Common myeloid progenitor, CD34-positive (primary cell): ENCODE measurements at regions of chr6 and their contacts with region 1.

Region 1: DNA sequence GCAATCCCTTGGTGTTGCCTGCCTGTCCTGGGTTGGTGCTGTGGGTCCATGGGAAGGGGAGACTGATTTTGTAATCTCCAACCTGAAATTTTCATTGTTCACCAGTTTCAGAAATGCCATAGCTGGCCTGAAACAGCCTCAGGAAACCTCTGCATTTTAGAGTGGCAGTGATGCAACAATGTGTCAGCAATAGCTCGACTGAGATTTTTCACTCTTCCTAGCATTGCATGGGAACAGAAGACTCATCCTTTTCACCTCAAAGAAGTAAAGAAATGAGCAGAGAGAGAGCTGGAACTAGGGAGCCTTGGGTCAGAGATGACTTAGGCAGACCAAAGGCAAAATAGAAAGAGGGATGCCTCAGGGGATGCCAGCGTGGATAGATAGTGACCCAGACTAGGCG is 23.7 kb upstream of the TMEM14A start:
- DNase-seq: no peak
- H3K4me3 ChIP-seq: no peak overlapping the region
- H3K27ac ChIP-seq: no peak overlapping the region
- H3K4me1 ChIP-seq: peaks cover 2 to 61% (median 6%) of the 10 kb centered on the region in 4 experiments
- H3K27me3 ChIP-seq: no peaks in the 10 kb centered on the region

Region 2: GRCh38 chr6:52407467-52407866 is 239.7 kb before region 1 on chr6:
- CTCF ChIA-PET with region 1: interaction called, 10 read pairs
- POLR2A ChIA-PET with region 1: no interaction called
- DNase-seq: peak; percentile 72 to 89 (median 84)
- H3K4me3 ChIP-seq: no peak overlapping the region
- H3K27ac ChIP-seq: no peak overlapping the region
- H3K4me1 ChIP-seq: no peaks in the 10 kb centered on the region
- H3K27me3 ChIP-seq: no peaks in the 10 kb centered on the region

Region 3: DNA sequence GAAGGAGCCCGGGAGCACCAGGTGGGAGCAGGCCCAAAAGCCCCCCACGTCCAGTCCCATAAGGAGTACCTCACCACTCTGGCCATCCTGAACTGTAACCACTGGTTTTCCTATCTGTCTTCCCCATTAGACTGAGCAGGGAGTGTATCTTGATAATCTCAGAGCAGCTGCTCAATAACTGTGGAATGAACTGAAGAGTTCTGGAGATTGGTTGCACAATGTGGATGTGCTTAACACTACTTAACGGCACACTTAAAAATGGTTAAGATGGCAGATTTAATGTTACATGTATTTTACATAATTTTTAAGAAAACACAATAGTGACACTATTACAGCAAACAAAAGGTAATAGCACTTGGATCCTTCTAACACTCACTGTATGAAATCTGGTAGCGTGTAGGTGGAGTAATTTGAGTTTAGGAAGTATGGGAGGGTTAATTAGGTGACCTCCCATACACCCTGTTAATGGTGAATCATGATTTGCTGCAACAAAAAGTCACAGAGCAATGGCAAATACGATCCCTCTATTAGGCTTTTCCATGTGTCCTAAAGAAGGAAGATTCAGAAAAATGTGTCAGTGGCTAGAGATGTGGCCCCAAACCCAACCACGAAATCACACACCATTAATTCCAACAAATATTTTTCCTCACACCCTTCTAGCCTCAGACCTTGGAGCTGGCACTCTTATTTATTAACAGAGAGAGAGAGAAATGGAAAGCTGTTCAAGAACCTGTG is 88.8 kb before region 1 on chr6:
- CTCF ChIA-PET with region 1: no interaction called
- POLR2A ChIA-PET with region 1: no interaction called
- DNase-seq: no peak
- H3K4me3 ChIP-seq: no peak overlapping the region
- H3K27ac ChIP-seq: no peak overlapping the region
- H3K4me1 ChIP-seq: peaks cover 0 to 5% (median 2%) of the 10 kb centered on the region in 4 experiments
- H3K27me3 ChIP-seq: no peaks in the 10 kb centered on the region

Region 4: DNA sequence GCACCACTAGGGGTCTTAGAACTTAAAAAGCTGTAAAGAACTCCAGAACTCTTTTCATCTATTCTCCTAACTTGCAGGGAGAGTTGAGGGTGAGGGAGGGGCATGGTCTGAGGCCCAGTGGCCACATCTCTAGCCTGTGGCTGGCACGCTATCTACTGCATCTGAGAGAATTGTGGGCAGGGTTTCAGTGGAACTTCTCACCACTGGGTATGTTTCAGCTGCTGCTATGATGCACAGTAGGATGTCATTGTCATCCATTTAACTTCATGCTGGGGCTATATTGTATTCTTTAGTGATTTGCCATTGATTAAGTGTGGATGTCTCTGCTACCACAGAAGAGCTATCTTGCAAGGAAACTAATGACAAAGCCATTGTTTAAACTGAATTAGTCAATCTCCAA is 28.2 kb after region 1 on chr6:
- CTCF ChIA-PET with region 1: interaction called, 11 read pairs
- POLR2A ChIA-PET with region 1: no interaction called
- DNase-seq: no peak
- H3K4me3 ChIP-seq: no peak overlapping the region
- H3K27ac ChIP-seq: no peak overlapping the region
- H3K4me1 ChIP-seq: peaks cover 0 to 13% (median 9%) of the 10 kb centered on the region in 4 experiments
- H3K27me3 ChIP-seq: peaks cover 0 to 1% (median 0%) of the 10 kb centered on the region in 5 experiments